ENCODE measurements at regions of chr12 and their contacts with region 1.

Region 1: DNA sequence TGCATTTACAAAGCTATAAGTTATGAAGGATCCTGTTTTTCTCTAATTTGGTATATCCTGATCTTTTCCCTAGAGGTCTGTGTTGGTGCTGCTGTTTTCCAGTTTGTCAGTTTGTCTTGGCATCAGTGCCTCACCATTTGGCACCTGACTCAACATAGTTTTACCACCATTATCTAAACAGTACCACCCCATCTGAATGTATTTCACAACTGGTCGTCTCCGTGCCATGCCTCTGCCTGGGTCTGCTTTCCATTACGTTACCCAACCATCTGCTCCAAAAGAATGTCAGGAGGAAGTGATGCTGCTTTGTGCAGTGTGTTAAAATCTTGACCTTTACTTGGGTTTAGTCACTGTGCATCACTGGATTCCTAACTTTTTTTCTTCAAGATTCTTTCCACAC is 129.3 kb upstream of the RASSF8 start:
- DNase-seq: peak; percentile 99
- ATAC-seq: peak; percentile 92
- H3K4me3 ChIP-seq: no peak overlapping the region
- H3K27ac ChIP-seq: peak overlapping the region; percentile 84
- H3K4me1 ChIP-seq: peaks cover 37% of the 10 kb centered on the region
- H3K27me3 ChIP-seq: no peaks in the 10 kb centered on the region
- CTCF ChIP-seq: peak; percentile 30; the same call in 1 of the 2 replicates

Region 2: DNA sequence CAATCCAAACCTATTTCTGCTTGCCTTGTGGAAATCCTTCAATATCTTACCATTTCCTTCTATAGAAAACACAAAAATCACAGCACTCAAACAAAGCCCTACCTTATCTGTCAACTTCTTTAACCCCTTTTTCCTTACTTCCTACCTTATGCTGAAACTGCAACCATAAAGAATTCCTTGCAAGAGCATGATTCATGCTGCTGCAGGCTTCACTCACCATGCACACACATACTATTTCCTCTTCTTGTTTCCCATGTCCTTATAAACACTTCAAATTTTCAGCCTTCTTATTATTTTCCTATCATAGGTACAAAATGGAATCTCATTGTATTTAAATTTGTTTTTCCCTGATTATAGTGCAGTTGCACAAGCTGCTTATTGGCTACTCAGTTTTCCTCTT is 299.5 kb before region 1 on chr12:
- CTCF ChIA-PET with region 1: no interaction called
- POLR2A ChIA-PET with region 1: no interaction called
- intact Hi-C with region 1: no loop called
- DNase-seq: peak; percentile 33
- ATAC-seq: peak; percentile 64; the same call in 1 of the 2 replicates
- H3K4me3 ChIP-seq: no peak overlapping the region
- H3K27ac ChIP-seq: no peak overlapping the region
- H3K4me1 ChIP-seq: 0 out of 2 replicates have a peak, but pooled peaks cover 5% of the 10 kb centered on the region
- H3K27me3 ChIP-seq: no peaks in the 10 kb centered on the region
- CTCF ChIP-seq: no peak

Region 3: DNA sequence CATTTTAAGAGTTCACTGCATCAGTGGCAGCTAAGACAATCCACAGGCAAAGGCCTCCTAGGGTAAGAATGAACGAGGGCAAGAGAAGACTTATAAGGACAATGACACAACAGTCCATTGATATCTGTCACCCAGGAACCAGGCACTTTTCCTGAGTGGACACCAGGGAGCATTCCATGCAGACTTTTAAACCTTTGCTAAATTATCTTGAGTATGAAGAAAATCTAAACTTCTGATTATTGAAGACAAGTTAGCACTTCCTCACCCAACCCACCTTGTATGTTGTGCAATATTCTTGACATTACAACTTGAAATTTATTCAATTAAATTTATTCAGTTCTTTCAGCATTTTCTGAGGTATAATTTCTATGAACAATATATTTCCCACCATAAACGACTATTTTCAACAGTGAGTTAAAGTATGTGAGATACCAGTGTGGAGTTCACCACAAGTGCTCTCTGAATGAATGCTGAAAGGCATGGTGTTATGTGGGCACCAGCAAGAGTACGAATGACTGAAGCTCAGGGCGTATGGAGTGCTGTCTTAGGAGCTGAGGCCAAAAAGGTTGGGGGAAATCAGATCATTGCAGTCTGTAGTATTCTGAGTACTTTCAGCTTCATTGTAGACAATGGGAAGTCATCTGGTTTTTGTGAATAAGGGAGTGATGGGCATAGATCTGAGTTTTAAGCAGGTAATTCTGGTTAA is 151.8 kb before region 1 on chr12:
- CTCF ChIA-PET with region 1: no interaction called
- POLR2A ChIA-PET with region 1: no interaction called
- intact Hi-C with region 1: loop called (anchors 5 kb)
- DNase-seq: peak; percentile 46
- ATAC-seq: peak; percentile 74
- H3K4me3 ChIP-seq: no peak overlapping the region
- H3K27ac ChIP-seq: no peak overlapping the region
- H3K4me1 ChIP-seq: peaks cover 5% of the 10 kb centered on the region; the same call in 1 of the 2 replicates
- H3K27me3 ChIP-seq: no peaks in the 10 kb centered on the region
- CTCF ChIP-seq: peak; percentile 52

Measured in PC-3 (cell line).